HEK293 (cell line): ENCODE measurements at regions of chr16 and their contacts with region 1.

Region 1: DNA sequence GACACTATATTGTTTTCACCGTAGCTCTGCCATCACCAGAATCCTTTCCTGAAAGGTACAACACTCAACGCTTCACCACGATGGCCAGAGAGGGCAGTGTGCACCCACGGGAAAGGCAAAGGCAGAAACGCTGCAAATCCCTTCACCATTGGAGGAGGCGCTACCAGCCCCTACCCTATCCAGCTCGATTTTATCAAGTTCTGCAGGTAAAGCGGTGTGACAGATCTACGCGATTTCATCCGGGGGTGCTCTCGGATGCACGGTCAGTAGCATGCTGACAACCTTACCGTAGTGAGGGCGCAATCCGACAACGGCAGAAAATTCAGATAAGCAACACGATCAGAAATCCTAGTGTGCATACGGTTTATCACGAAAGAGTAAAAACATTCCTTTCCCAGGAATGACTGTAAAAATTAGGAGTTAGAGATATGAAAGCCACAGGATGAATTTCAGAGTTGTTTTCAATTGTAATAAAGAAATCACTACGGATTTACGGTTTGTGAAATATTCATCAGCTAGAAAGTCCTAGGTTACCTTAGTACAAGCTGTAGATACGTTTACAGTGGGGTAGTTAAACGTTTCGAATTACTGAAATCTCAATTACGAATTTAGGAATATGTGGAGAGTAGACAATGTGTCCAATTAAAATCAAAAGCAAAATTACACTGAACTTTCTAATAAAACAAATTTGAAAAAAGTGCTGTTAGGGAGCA is 1.8 kb downstream of the NETO2 start:
- H3K4me3 ChIP-seq: peak overlapping the region; percentile 67
- H3K27ac ChIP-seq: no peak overlapping the region
- H3K4me1 ChIP-seq: 0 out of 2 replicates have a peak, but pooled peaks cover 2% of the 10 kb centered on the region
- CTCF ChIP-seq: peak; percentile 96

Region 2: DNA sequence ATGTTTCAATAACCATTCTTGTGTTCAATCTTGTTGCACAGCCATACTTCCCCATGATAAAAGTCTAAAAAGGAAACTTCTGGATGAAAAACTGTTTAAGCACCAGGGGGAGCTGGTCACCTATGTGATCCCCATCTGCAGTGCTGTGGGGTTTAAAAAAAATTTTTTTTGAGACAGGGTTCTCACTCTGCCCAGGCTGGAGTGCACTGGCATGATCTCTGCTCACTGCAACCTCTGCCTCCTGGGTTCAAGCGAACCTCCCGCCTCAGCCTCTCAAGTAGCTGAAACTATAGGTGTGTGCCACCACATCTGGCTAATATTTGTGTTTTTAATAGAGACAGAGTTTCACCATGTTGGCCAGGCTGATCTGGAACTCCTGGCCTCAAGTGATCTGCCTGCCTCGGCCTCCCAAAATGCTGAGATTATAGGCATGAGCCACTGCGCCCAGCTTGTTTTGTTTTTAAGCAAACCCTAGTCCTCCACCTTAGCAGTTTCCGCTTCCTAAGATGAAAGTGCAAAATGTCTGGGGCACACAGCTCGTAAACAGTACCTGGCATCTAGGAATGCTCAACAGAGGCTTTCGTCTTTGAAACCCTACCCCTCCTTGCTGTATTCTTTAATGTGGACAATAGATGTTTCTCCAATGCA is 193.9 kb before region 1 on chr16:
- CTCF ChIA-PET with region 1: interaction called, 13 read pairs
- POLR2A ChIA-PET with region 1: no interaction called
- H3K4me3 ChIP-seq: no peak overlapping the region
- H3K27ac ChIP-seq: no peak overlapping the region
- H3K4me1 ChIP-seq: no peaks in the 10 kb centered on the region
- CTCF ChIP-seq: peak; percentile 49

Region 3: DNA sequence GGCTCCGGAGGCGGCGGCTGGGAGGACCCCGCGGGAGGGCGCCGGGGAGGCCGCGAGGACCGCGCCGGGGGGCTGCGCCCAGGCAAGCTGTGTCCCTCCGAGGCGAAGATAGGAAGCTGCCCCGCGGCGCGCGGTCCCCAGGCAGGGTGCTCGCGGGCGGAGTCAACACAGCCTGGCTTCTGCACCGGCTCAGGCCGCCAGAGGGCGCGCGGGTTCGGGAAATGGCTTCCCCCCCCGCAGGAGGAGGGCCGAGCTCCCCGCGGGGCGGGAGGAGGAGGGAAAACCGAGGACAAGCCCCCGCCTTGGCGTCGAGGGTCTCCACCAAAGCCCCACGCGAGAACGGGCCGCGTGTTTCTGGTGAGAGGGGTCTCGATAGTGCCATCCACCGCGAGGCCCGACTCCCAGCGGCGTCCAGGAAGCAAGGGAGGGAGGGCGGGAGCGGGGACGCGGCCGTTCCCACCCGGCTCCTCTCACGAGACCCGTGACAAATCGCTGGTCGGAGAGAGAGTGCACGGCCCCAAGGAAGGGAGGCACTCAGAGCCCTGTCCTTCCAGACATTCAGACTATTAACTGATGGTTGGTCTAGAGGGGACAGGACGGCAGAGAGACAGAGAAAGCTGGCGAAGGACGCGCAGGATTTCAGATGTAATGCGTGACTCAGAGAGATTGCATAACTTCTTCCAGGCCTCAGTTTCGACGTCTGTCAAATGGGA is 104.0 kb before region 1 on chr16:
- CTCF ChIA-PET with region 1: interaction called, 21 read pairs
- POLR2A ChIA-PET with region 1: interaction called, 14 read pairs
- H3K4me3 ChIP-seq: peak overlapping the region; percentile 44
- H3K27ac ChIP-seq: peak overlapping the region; percentile 54; the same call in 1 of the 2 replicates
- H3K4me1 ChIP-seq: no peaks in the 10 kb centered on the region
- CTCF ChIP-seq: peak; percentile 96

Region 4: GRCh38 chr16:47125757-47126156 is 16.2 kb before region 1 on chr16:
- CTCF ChIA-PET with region 1: interaction called, 21 read pairs
- POLR2A ChIA-PET with region 1: no interaction called
- H3K4me3 ChIP-seq: no peak overlapping the region
- H3K27ac ChIP-seq: no peak overlapping the region
- H3K4me1 ChIP-seq: no peaks in the 10 kb centered on the region
- CTCF ChIP-seq: no peak

Region 5: GRCh38 chr16:47448830-47449575 is 307.1 kb after region 1 on chr16:
- CTCF ChIA-PET with region 1: no interaction called
- POLR2A ChIA-PET with region 1: no interaction called
- H3K4me3 ChIP-seq: no peak overlapping the region
- H3K27ac ChIP-seq: no peak overlapping the region
- H3K4me1 ChIP-seq: no peaks in the 10 kb centered on the region
- CTCF ChIP-seq: no peak

Region 6: GRCh38 chr16:48156790-48157209 is 1014.9 kb after region 1 on chr16:
- CTCF ChIA-PET with region 1: interaction called, 14 read pairs
- POLR2A ChIA-PET with region 1: no interaction called
- H3K4me3 ChIP-seq: no peak overlapping the region
- H3K27ac ChIP-seq: no peak overlapping the region
- H3K4me1 ChIP-seq: no peaks in the 10 kb centered on the region
- CTCF ChIP-seq: peak; percentile 87